Vagina (tissue), 2 donors: ENCODE measurements at regions of chr1 and their contacts with region 1.

Region 1: DNA sequence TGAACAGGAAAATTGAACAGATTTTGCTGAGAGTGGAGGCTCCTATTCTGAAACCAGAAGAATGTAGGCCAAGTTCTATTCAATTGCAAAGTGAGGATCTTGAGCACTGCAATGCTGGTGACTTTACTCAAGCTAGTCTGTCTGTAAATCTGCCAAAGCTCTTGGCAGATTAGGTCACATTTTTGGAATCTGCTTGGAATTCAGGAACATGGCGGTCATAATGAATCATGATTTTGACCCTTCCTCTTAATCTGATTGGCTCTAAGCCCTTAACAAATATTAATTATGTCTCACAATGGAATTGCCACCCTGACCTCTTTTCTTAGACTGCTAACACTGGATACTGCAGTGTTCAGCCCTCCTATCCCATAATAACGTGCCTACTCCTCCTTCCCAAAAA is 7.2 kb upstream of the GNG12 start:
- DNase-seq: no peak
- H3K4me3 ChIP-seq: no peak overlapping the region
- H3K27ac ChIP-seq: no peak overlapping the region
- H3K4me1 ChIP-seq: peaks cover 17% of the 10 kb centered on the region
- H3K27me3 ChIP-seq: no peaks in the 10 kb centered on the region
- CTCF ChIP-seq: no peak
- POLR2A ChIP-seq: no peak

Region 2: DNA sequence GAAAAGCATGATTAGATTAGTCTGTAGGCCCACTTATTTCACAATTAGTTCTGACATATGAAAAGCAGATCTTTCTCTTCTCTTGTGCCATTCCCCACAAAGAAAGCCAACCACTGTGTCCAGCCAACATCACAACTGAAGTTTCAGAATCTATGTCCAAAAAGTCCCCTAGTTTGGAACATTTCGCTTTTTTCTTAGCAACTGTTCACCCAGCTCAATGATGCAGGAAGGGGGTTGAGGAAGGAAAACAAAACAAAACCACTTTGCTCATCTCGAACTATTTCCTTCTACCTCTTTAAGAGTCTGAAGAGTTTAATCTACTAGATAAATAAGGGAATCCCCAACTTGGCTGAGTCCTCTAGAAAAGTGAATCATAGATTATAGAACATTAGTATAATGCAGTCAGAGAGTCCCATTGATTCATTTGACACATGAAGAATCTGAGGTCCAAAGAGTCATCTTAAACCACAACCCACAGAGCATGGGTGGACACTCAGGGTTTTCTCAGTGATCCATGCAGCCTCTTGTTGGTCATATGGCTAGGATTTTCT is 1465.8 kb before region 1 on chr1:
- intact Hi-C with region 1: loop called (anchors 5 kb)
- DNase-seq: no peak
- H3K4me3 ChIP-seq: no peak overlapping the region
- H3K27ac ChIP-seq: peak overlapping the region; percentile 31
- H3K4me1 ChIP-seq: peaks cover 26% of the 10 kb centered on the region
- H3K27me3 ChIP-seq: no peaks in the 10 kb centered on the region
- CTCF ChIP-seq: no peak
- POLR2A ChIP-seq: no peak

Region 3: GRCh38 chr1:67013573-67013972 is 826.9 kb before region 1 on chr1:
- intact Hi-C with region 1: loop called (anchors 5 kb)
- DNase-seq: no peak
- H3K4me3 ChIP-seq: no peak overlapping the region
- H3K27ac ChIP-seq: no peak overlapping the region
- H3K4me1 ChIP-seq: peaks cover 5% of the 10 kb centered on the region
- H3K27me3 ChIP-seq: no peaks in the 10 kb centered on the region
- CTCF ChIP-seq: no peak
- POLR2A ChIP-seq: no peak

Region 4: GRCh38 chr1:67664048-67664447 is 176.4 kb before region 1 on chr1:
- intact Hi-C with region 1: no loop called
- DNase-seq: no peak
- H3K4me3 ChIP-seq: no peak overlapping the region
- H3K27ac ChIP-seq: no peak overlapping the region
- H3K4me1 ChIP-seq: no peaks in the 10 kb centered on the region
- H3K27me3 ChIP-seq: no peaks in the 10 kb centered on the region
- CTCF ChIP-seq: no peak
- POLR2A ChIP-seq: no peak

Region 5: DNA sequence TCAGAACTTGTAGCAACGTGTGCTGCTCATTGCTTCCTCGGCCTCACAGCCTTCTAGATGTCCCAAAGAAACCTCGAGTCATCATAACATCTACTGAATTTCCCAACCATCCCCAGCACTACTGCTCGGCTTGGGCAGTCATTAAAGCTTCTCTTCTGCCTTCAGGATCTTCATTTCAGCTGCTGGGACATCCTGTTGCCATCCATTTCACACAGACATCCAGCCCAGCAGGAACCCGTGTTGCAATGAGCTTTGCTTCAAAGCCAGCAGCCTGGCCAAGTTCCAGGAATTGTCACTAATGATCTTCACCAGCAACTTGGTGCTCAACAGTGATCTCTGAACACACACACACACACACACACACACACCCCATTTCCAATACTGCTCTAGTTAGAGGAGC is 373.4 kb after region 1 on chr1:
- intact Hi-C with region 1: loop called (anchors 5 kb)
- DNase-seq: peak in 1 of 2 donors; percentile 92
- H3K4me3 ChIP-seq: no peak overlapping the region
- H3K27ac ChIP-seq: peak overlapping the region; percentile 44
- H3K4me1 ChIP-seq: peaks cover 69% of the 10 kb centered on the region
- H3K27me3 ChIP-seq: no peaks in the 10 kb centered on the region
- CTCF ChIP-seq: no peak
- POLR2A ChIP-seq: no peak